ENCODE measurements at regions of chr2 and their contacts with region 1.

Region 1: DNA sequence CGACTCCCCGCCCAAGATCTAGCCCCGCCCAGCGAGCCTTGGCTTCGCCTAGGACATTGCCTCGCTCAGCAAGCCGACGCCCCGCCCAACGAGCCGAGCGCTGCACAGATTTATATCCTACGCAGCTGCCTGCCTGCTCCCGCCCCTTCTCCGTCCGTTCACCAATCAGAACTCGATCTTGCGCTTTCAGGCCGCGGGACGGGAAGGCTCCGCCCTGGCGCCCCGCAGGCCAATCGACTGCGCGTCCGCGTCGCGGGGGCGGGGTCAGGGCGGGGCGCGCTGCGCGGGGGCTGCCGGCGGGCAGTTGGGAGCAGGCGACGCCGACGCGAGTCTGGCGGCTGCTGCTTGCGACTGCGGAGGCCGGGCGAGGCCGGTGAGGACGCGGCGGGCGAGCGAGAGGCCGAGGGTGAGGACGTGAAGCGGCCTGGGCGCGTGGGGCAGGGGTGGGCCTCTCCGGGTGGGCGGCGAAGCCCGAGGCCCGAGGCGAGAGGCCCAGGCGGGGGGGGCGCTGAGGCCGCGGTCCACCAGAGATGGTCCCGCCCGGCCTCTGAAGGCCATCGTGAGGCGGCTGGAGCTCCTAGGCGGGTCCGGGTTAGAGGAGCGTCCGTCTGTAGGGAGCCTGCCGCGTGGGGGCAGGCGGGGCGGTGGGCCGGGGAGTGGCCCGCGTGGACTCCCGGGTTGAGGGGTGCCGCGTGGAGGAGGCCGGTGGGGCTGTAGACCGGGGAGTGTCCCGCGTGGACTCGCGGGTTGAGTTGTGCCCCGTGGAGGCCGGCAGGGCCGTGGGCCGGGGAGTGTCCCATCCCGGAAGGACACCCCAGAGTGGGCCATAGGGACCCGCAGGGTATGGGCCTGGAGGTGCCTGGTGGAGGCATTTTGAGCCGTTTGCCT is at the start of gene FARP2:
- DNase-seq: peak; percentile 99 to 100 (median 99)

Region 2: GRCh38 chr2:241315093-241315878 is 40.9 kb before region 1 on chr2 and contains the start of gene HDLBP:
- intact Hi-C with region 1: loop called (anchors 5 kb)
- DNase-seq: peak; percentile 96 to 99 (median 98)